Ascending aorta (tissue), 2 donors: ENCODE measurements at regions of chr12 and their contacts with region 1.

Region 1: DNA sequence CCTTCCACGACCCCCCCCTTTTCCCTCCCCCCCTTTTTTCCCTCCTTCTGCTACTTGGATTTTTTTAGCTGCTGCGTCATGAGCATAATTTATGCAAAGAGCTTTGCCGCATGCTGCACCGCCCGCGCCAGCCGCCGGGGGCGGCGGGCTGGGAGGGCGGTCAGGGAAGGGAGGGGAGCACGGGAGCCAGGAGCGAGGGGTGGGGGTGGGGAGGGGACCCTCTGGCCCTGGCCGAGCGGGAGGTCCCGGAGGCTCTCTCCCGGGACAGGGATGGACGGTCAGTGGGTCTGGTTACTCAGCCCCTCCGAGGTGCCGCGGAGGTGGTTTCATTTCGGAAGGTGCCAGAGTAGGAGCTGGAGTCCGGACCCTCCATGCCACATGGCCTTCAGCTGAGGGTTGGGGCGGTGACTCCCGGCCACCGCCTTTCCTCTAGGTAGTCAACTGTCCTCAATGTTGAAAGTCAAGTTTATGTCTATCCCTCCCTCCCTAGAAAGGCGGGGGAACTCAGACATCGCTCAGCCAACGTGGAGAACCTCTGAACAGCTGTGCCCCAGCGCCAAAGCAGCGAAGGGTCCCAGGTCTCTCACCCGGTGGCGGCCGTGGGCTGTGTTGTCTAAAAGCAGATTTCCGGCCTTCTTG is at the start of gene POU6F1:
- DNase-seq: peak; percentile 21 to 84
- H3K4me3 ChIP-seq: peak within 1 kb of the TSS; percentile 98
- H3K27ac ChIP-seq: peak within 1 kb of the TSS; percentile 99
- H3K4me1 ChIP-seq: peaks cover 4 to 15% of the 10 kb centered on the region in 2 donors
- H3K27me3 ChIP-seq: no peaks in the 10 kb centered on the region
- CTCF ChIP-seq: peak; percentile 45 to 84 (median 81)
- total RNA-seq, gene POU6F1: 24.7 TPM

Region 2: DNA sequence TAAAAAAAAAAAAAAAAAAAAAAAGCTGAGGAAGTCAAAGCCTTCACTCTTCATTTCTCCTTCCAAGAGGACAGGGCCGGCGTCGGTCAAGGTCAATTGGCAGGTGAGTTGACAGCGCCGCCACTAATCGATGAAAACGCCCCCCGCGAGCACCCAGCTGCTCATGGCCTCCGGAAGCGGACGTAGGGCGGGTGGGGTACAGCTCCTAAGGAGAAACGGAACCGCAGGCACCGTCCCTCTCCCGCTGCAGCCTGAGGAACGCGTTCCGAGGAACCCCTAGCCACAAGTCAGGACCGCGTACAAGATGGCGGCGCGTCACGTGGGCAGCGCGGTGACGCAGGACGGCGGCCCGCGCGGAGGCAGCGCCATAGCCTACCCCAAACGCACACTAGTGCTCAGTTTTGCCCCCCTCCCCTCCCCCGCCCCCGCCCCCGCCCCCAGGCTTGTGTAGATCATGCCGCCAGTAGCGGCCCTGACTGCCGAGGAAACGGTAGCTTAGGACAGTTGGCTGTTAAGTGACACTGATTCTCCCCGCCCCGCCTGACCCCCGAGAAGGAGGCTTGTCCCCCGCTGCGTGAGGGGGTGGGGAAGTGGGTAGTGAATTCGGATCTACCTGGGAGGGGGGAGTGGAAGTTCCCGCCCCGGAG is 454.3 kb before region 1 on chr12 and contains the start of gene ATF1:
- intact Hi-C with region 1: loop called (anchors 10 kb)
- DNase-seq: peak; percentile 73 to 96
- H3K4me3 ChIP-seq: peak within 1 kb of the TSS; percentile 83 to 94
- H3K27ac ChIP-seq: peak within 1 kb of the TSS; percentile 96 to 98
- H3K4me1 ChIP-seq: peaks cover 0 to 15% of the 10 kb centered on the region in 2 donors
- H3K27me3 ChIP-seq: no peaks in the 10 kb centered on the region
- CTCF ChIP-seq: no peak
- total RNA-seq, gene ATF1: 6.8 TPM

Region 3: GRCh38 chr12:50924439-50925341 is 293.4 kb before region 1 on chr12:
- intact Hi-C with region 1: loop called (anchors 10 kb)
- DNase-seq: peak; percentile 63 to 96
- H3K4me3 ChIP-seq: peak overlapping the region; percentile 75 to 80
- H3K27ac ChIP-seq: peak overlapping the region; percentile 79 to 82
- H3K4me1 ChIP-seq: peaks cover 0 to 24% of the 10 kb centered on the region in 2 donors
- H3K27me3 ChIP-seq: no peaks in the 10 kb centered on the region
- CTCF ChIP-seq: no peak

Region 4: DNA sequence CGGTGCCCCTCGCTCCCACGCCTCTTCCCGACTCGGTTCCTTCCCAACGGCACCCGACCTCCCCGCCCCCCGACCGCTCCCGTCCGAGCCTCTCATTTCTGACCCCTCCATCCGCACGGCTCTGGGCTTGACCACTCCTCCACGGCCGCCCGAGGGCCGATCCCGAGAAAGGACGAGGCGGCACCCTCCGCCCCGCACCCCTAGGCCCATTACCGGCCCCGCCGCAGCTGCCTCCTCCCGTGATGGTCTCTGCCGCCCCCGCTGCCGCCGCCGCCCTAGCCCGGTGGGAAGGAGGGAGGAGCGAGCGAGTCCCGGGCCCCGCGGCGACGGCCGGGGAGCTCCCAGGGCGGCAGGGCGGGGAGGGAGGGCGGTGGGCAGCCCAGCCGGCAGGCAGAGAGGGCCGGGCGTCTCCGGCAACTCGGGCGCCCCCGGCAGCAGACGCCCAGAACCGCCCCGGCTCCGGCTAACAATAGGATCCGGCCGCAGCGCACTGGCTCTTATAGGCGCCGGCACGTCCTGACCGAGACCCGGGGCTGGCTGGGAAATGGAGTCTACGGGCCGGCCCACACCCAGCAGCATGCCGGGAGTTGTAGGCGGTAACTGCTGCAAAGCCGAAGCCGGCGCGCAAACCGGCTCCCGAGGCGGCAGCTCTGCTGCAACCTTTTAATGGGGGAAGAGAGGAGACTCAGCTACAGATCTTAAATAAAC is 134.8 kb before region 1 on chr12 and contains the start of gene CSRNP2:
- intact Hi-C with region 1: loop called (anchors 1 kb)
- DNase-seq: peak; percentile 90 to 98
- H3K4me3 ChIP-seq: peak within 1 kb of the TSS; percentile 91 to 99
- H3K27ac ChIP-seq: peak within 1 kb of the TSS; percentile 95 to 99
- H3K4me1 ChIP-seq: peaks cover 5 to 13% of the 10 kb centered on the region in 2 donors
- H3K27me3 ChIP-seq: no peaks in the 10 kb centered on the region
- CTCF ChIP-seq: no peak
- total RNA-seq, gene CSRNP2: 13.6 TPM

Region 5: DNA sequence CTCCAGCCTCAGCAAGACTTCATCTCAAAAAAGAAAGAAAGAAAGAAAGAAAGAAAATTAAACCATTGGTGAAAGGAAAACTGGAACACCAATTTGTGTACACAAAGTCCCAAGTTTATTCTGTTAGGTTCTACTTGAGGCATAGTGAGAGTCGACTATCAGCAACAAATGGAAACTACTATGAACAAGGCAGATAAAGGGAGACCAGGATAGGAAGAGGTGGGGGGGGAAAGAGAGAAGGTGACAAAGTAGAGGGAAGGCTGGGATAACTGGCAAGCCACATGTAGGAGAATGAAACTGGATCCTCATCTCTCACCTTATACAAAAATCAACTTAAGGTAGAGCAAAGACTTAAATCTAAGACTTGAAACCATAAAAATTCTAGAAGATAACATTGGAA is 70.8 kb before region 1 on chr12:
- intact Hi-C with region 1: no loop called
- DNase-seq: no peak
- H3K4me3 ChIP-seq: no peak overlapping the region
- H3K27ac ChIP-seq: no peak overlapping the region
- H3K4me1 ChIP-seq: no peaks in the 10 kb centered on the region
- H3K27me3 ChIP-seq: no peaks in the 10 kb centered on the region
- CTCF ChIP-seq: no peak

Region 6: DNA sequence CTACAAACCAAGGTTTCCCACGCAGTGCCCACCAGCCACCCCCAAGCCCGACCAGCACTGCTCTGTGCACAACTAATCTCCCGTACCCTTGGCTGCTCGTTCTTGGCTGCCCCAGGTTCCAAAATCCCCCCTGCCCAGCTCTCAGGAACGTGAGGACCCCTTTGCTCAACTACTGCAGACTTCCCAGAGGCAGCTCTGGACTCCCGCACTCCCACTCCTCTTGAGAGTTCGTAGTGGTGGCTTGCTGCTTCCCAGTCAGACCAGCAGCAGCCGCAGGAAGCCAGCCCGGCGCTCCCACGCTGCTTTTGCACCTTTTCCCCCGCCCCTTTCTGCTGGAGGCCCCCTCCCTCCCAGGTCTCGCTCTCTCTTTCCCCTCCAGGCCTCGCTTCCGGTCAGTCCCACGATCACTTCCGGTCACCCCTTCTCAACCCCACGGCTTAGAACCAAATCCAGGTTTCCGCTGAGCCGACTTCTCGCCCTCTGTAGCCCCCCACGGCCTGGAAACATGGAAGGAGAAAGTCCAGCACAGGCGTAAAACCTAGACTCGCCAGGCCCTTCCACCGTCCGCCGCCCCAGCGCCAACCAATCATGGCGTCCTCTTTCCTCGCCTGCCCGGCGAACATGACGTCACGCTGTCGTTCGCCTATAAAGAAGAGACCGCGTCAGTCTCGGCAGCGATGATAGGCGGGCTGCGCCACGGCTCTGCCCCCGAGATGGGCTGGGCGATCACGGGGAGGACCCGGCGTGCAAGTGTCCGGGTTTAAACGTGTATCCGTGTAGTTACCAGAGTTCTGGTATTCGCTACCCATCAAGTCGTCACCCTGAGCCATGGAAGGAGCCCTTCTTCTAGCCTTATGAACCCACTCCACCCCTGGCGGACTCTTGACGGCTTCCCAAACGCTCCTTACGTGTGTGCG is 45.3 kb before region 1 on chr12 and contains the start of gene TFCP2:
- intact Hi-C with region 1: loop called (anchors 2 kb)
- DNase-seq: peak; percentile 91 to 98
- H3K4me3 ChIP-seq: peak within 1 kb of the TSS; percentile 85 to 94
- H3K27ac ChIP-seq: peak within 1 kb of the TSS; percentile 91 to 100
- H3K4me1 ChIP-seq: peaks cover 6% of the 10 kb centered on the region in 2 donors
- H3K27me3 ChIP-seq: no peaks in the 10 kb centered on the region
- CTCF ChIP-seq: no peak
- total RNA-seq, gene TFCP2: 3.0 TPM

Region 7: DNA sequence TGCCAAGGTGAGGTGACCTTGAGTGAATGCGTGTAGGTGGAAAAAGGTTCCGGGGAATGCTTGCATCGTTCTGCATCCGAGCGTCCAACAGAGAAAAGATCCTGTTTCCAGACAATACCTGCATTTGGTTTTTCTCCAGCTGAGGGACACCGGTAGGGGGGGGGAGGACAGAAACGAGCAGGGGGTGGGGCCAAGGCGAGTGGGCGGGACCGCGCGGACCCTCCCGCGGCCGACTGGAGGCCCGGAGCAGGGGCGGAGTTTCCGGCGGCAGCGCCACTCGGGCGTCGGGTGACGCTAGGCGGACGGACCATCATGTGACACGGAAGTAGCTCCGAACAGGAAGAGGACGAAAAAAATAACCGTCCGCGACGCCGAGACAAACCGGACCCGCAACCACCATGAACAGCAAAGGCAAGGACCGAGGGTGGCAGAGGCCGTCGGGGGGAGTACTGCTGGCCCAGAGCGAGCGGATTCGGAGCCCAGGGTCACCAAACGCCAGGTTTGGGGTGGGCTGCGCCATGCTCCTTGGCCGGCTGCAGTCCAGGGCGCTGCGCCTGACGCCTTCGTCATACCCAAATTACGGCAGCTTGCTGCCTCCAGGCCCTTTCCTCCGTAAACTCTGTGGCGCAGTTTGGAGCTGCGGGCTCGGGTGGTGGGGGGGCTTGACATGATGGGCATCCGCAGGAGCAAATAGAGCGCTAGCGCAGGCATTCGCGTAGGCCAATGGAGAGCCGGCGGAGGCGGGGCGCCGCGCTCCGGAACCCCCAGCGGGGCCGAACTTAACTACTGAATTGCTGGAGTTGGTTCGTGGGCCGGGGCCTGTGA is 20.6 kb after region 1 on chr12 and contains the start of gene DAZAP2:
- intact Hi-C with region 1: loop called (anchors 1 kb)
- DNase-seq: peak; percentile 85 to 97
- H3K4me3 ChIP-seq: peak within 1 kb of the TSS; percentile 74 to 96
- H3K27ac ChIP-seq: peak within 1 kb of the TSS; percentile 99
- H3K4me1 ChIP-seq: peaks cover 14 to 25% of the 10 kb centered on the region in 2 donors
- H3K27me3 ChIP-seq: no peaks in the 10 kb centered on the region
- CTCF ChIP-seq: no peak
- total RNA-seq, gene DAZAP2: 212 TPM

Region 8: DNA sequence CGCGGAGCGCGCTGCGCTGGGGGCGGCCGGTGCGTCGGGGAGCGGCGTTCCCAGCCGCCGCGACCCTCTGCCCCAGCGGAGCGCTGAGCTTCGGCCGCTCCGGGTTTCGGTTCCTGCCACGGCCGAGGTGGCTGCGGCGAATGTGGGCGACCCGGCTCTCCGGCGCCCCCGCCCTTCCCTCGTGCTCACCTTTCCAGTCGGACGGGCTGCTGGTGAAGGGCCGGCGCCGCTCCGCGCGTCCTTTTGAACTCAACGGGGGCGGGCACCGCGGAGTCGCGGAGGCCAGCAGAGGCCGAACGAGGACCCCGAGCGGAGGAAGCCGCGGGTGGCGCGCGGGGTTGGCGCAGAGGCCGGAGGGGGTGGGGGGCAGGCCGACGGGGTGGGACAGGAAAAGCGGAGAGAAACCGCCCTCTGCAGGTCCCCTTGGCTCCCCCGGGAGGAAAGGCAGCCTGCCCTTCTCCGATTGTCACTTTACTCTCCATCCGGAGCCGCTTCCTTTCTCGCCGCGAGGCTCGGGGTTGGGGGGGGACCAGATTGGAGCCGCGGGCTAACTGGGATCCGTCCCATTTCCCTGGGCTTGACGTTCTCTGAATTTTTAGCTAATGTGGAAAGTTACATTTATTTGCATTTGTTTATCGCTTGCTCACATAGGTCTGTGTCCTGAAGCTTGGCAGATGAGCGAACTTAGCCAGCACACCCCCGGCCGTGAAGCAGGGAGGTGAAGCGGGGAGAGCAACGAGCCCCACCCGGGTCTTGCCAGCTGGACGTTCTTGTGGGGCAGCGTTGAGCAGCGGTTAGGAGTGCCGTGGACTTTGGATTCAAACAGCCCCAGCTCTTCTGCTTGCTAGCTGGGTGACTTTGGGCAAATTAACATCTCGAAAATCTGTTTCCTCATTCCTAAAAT is 52.2 kb after region 1 on chr12 and contains the start of gene SMAGP:
- intact Hi-C with region 1: loop called (anchors 2 kb)
- DNase-seq: peak in 1 of 2 donors; percentile 67
- H3K4me3 ChIP-seq: peak within 1 kb of the TSS; percentile 97
- H3K27ac ChIP-seq: peak within 1 kb of the TSS; percentile 28 to 38
- H3K4me1 ChIP-seq: peaks cover 3% of the 10 kb centered on the region in 2 donors
- H3K27me3 ChIP-seq: no peaks in the 10 kb centered on the region
- CTCF ChIP-seq: peak in 1 of 3 experiments; percentile 4
- total RNA-seq, gene SMAGP: 27.4 TPM